ENCODE measurements at regions of chr17 and their contacts with region 1.

Region 1: GRCh38 chr17:63275318-63275970 is 170.7 kb downstream of the CYB561 start:
- DNase-seq: peak; percentile 40
- ATAC-seq: no peak
- H3K4me3 ChIP-seq: no peak overlapping the region
- H3K27ac ChIP-seq: no peak overlapping the region
- H3K4me1 ChIP-seq: no peaks in the 10 kb centered on the region
- H3K27me3 ChIP-seq: no peaks in the 10 kb centered on the region
- CTCF ChIP-seq: no peak
- EP300 ChIP-seq: no peak
- POLR2A ChIP-seq: no peak
- RAD21 ChIP-seq: no peak

Region 2: DNA sequence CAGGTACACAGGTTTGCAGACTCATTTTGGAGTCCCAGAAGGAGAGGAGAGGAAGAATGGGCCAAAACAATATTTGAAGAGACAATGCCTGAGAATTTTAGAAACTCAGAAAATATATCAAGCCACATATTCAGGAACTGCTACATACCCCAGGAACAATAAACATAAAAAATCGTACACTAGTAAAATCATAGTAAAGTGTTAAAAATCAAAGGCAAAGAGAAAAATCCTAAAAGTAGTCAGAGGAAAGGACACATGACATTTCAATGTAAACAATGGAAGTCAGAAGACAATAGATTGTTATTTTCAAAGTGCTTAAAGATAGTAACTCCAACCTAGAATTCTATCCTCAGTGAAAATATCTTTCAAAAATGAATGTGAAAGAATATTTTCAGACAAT is 1656.0 kb before region 1 on chr17:
- CTCF ChIA-PET with region 1: no interaction called
- POLR2A ChIA-PET with region 1: no interaction called
- in situ Hi-C with region 1: no loop called
- intact Hi-C with region 1: loop called (anchors 10 kb)
- DNase-seq: no peak
- ATAC-seq: no peak
- H3K4me3 ChIP-seq: no peak overlapping the region
- H3K27ac ChIP-seq: no peak overlapping the region
- H3K4me1 ChIP-seq: peaks cover 18% of the 10 kb centered on the region; the same call in 1 of the 2 replicates
- H3K27me3 ChIP-seq: no peaks in the 10 kb centered on the region
- CTCF ChIP-seq: no peak
- EP300 ChIP-seq: no peak
- POLR2A ChIP-seq: no peak
- RAD21 ChIP-seq: no peak

Region 3: DNA sequence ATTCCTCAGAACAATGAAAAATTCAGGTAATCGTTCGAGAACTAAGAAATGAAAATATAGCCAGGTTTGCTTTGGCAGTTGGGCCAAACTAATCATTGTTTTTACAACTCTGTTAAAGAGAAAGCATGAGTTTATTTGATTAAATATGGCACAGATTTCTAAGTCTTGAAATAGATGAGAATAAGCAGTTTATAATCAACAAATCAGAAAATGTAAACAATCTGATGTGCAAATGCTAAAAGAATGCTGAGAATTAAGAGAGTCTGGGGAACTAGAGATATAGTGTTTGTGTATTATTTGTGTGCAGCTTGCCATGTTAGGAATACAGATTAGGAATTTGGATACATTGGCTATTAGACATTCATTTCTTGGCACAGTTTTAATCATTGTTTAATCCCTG is 96.9 kb before region 1 on chr17:
- CTCF ChIA-PET with region 1: no interaction called
- POLR2A ChIA-PET with region 1: no interaction called
- in situ Hi-C with region 1: no loop called
- intact Hi-C with region 1: no loop called
- DNase-seq: no peak
- ATAC-seq: no peak
- H3K4me3 ChIP-seq: no peak overlapping the region
- H3K27ac ChIP-seq: no peak overlapping the region
- H3K4me1 ChIP-seq: no peaks in the 10 kb centered on the region
- H3K27me3 ChIP-seq: 0 out of 5 replicates have a peak, but pooled peaks cover 0 to 3% of the 10 kb centered on the region in 2 experiments
- CTCF ChIP-seq: no peak
- EP300 ChIP-seq: no peak
- POLR2A ChIP-seq: no peak
- RAD21 ChIP-seq: no peak

Region 4: GRCh38 chr17:63345611-63346010 is 70.2 kb after region 1 on chr17:
- CTCF ChIA-PET with region 1: no interaction called
- POLR2A ChIA-PET with region 1: no interaction called
- in situ Hi-C with region 1: no loop called
- intact Hi-C with region 1: no loop called
- DNase-seq: no peak
- ATAC-seq: no peak
- H3K4me3 ChIP-seq: no peak overlapping the region
- H3K27ac ChIP-seq: no peak overlapping the region
- H3K4me1 ChIP-seq: no peaks in the 10 kb centered on the region
- H3K27me3 ChIP-seq: peaks cover 0 to 3% of the 10 kb centered on the region in 2 experiments; a peak in 1 of 5 replicates
- CTCF ChIP-seq: no peak
- EP300 ChIP-seq: no peak
- POLR2A ChIP-seq: no peak
- RAD21 ChIP-seq: no peak

Measured in HepG2 (cell line).